ENCODE measurements at regions of chr19 and their contacts with region 1.

Region 1: GRCh38 chr19:10461047-10461790 is 40.9 kb downstream of the PDE4A start:
- DNase-seq: peak; percentile 94
- ATAC-seq: peak; percentile 100
- H3K4me3 ChIP-seq: peak overlapping the region; percentile 47; the same call in 1 of the 2 replicates
- H3K27ac ChIP-seq: no peak overlapping the region
- H3K4me1 ChIP-seq: 0 out of 2 replicates have a peak, but pooled peaks cover 5% of the 10 kb centered on the region
- H3K27me3 ChIP-seq: no peaks in the 10 kb centered on the region
- CTCF ChIP-seq: no peak

Region 2: GRCh38 chr19:10104130-10104513 is 357.1 kb before region 1 on chr19:
- CTCF ChIA-PET with region 1: interaction called, 12 read pairs
- POLR2A ChIA-PET with region 1: no interaction called
- intact Hi-C with region 1: no loop called
- DNase-seq: no peak
- ATAC-seq: no peak
- H3K4me3 ChIP-seq: no peak overlapping the region
- H3K27ac ChIP-seq: no peak overlapping the region
- H3K4me1 ChIP-seq: peaks cover 12% of the 10 kb centered on the region
- H3K27me3 ChIP-seq: no peaks in the 10 kb centered on the region
- CTCF ChIP-seq: no peak

Region 3: GRCh38 chr19:10279737-10280442 is 181.3 kb before region 1 on chr19:
- CTCF ChIA-PET with region 1: no interaction called
- POLR2A ChIA-PET with region 1: no interaction called
- intact Hi-C with region 1: no loop called
- DNase-seq: no peak
- ATAC-seq: no peak
- H3K4me3 ChIP-seq: no peak overlapping the region
- H3K27ac ChIP-seq: no peak overlapping the region
- H3K4me1 ChIP-seq: peaks cover 7% of the 10 kb centered on the region
- H3K27me3 ChIP-seq: no peaks in the 10 kb centered on the region
- CTCF ChIP-seq: no peak

Region 4: GRCh38 chr19:10653715-10654492 is 192.7 kb after region 1 on chr19 and contains the start of gene ILF3:
- CTCF ChIA-PET with region 1: no interaction called
- POLR2A ChIA-PET with region 1: interaction called, 13 read pairs
- intact Hi-C with region 1: no loop called
- DNase-seq: peak; percentile 100
- ATAC-seq: peak; percentile 74
- H3K4me3 ChIP-seq: peak within 1 kb of the TSS; percentile 94
- H3K27ac ChIP-seq: peak within 1 kb of the TSS; percentile 88
- H3K4me1 ChIP-seq: peaks cover 19% of the 10 kb centered on the region
- H3K27me3 ChIP-seq: no peaks in the 10 kb centered on the region
- CTCF ChIP-seq: no peak
- total RNA-seq, gene ILF3: 322 and 441 TPM in 2 replicates